Activated T-helper 2 cell treated with anti-CD3 and anti-CD28 coated beads, Interferon-gamma antibody, Interleukin-2, Interleukin-4, amounts not matched to agents 10 μg/mL and 5 μg/mL and 100 μg/mL, durations not matched to agents 14 hours and 24 hours and 36 hours (primary cell): ENCODE measurements at regions of chrX and their contacts with region 1.

Region 1: DNA sequence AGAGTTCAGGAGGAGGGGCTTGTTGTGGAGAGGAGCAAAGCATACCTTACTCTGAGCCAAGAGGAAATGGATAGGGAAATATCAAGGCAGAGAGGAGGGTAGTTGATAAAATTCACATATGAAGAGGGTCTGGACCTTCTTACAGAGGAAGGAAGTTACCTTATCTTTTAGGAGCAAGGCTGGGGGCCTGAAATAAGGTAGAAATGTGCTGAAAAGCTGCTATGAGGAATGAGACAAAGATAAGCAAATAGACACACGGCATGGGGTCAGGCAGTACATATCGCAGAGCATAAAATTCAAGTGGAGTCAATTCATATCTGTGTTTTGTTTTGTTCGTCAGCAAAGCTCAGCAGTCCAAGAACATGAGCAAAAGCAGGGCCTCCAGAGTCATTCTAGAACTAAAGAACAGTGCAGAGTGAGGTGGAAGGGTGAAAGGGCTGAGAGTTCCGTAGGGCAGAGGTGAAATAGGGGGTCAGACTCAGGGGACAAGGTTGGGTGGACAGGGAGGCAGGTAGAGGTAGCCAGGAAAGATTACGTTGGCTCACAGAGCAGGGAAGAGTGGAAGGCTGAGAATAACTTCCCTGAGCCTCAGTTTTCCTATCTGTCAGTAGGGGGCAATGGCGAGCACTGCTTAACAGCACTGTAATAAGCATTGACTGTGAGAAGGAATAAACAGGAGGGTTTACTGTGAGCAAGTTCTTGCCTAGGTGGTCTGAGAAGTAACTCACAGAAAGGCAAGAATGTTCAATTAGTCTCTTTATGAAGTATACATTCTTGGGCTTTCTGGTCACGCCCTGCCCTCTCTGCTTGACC is 9.2 kb downstream of the VSIG4 start:
- DNase-seq: no peak
- H3K4me3 Mint-ChIP-seq: no peak overlapping the region
- H3K27ac Mint-ChIP-seq: no peak overlapping the region
- H3K4me1 Mint-ChIP-seq: peaks cover 4% of the 10 kb centered on the region
- H3K27me3 Mint-ChIP-seq: no peaks in the 10 kb centered on the region

Region 2: GRCh38 chrX:66200855-66201795 is 170.4 kb after region 1 on chrX:
- intact Hi-C with region 1: loop called (anchors 10 kb)
- DNase-seq: no peak
- H3K4me3 Mint-ChIP-seq: no peak overlapping the region
- H3K27ac Mint-ChIP-seq: peak overlapping the region; percentile 60
- H3K4me1 Mint-ChIP-seq: peaks cover 23% of the 10 kb centered on the region
- H3K27me3 Mint-ChIP-seq: no peaks in the 10 kb centered on the region

Region 3: GRCh38 chrX:66698273-66699204 is 667.8 kb after region 1 on chrX:
- intact Hi-C with region 1: loop called (anchors 10 kb)
- DNase-seq: no peak
- H3K4me3 Mint-ChIP-seq: no peak overlapping the region
- H3K27ac Mint-ChIP-seq: no peak overlapping the region
- H3K4me1 Mint-ChIP-seq: no peaks in the 10 kb centered on the region
- H3K27me3 Mint-ChIP-seq: no peaks in the 10 kb centered on the region